ENCODE measurements at regions of chr18 and their contacts with region 1.

Region 1: DNA sequence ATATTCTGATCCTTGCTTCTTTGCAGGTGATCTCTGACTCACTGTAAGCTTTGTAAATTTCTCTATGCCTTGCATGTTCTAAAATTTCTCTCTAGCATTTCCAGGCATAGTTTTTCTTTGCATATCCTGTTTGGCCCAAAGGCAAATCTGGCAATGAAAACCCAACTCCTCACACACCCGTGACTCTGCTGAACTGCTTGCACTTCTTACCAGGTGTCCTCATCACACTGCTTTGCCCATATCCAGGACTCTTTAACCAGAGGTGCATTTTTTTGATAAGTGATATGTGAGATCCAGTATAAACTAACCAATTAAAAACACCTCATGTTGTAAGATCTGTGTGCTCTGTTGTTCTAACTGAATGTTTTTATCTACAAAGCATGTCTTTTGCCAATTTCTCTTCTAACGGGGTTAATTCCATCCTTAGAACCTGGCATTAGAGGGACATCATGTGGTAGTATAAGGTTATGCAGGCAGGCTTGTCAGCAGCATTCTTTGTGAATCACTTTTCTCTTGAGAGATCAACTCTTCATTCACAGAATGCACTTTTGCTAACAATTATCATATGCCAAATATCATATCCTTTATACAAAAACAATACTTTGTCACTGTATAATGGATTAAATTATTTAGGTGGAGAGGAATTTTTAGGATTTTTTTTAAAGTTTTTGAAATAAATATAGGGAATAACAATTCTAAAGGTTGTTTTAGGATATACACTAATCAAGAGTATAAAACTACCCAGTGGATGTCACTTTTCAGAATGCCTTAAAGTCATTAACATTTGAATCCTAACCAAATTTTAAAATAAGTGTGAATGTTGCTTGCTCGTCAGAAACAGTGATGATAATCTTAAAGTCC is 20.8 kb upstream of the TMX3 start:
- DNase-seq: peak in 5 of 9 donors; percentile 28 to 46 (median 36)
- ATAC-seq: peak; percentile 78
- H3K4me3 ChIP-seq: no peak overlapping the region
- H3K4me3 Mint-ChIP-seq: no peak overlapping the region
- H3K27ac ChIP-seq: no peak overlapping the region
- H3K27ac Mint-ChIP-seq: no peak overlapping the region
- H3K4me1 ChIP-seq: no peaks in the 10 kb centered on the region
- H3K4me1 Mint-ChIP-seq: peaks cover 0 to 5% (median 0%) of the 10 kb centered on the region in 7 donors
- H3K27me3 ChIP-seq: no peaks in the 10 kb centered on the region
- H3K27me3 Mint-ChIP-seq: no peaks in the 10 kb centered on the region

Region 2: GRCh38 chr18:68721681-68722583 is 13.8 kb before region 1 on chr18:
- CTCF ChIA-PET with region 1: no interaction called
- POLR2A ChIA-PET with region 1: interaction called, 3 read pairs
- intact Hi-C with region 1: loop called in 1 of 2 experiments (anchors 2 kb)
- DNase-seq: peak in 7 of 9 donors; percentile 16 to 42 (median 37)
- ATAC-seq: peak; percentile 79
- H3K4me3 ChIP-seq: peak overlapping the region; percentile 53
- H3K4me3 Mint-ChIP-seq: peak overlapping the region; percentile 65 to 94 (median 88)
- H3K27ac ChIP-seq: peak overlapping the region; percentile 59
- H3K27ac Mint-ChIP-seq: peak overlapping the region; percentile 87 to 95 (median 93)
- H3K4me1 ChIP-seq: peaks cover 0 to 12% of the 10 kb centered on the region in 2 donors
- H3K4me1 Mint-ChIP-seq: peaks cover 11 to 42% (median 33%) of the 10 kb centered on the region in 7 donors
- H3K27me3 ChIP-seq: no peaks in the 10 kb centered on the region
- H3K27me3 Mint-ChIP-seq: no peaks in the 10 kb centered on the region

Region 3: GRCh38 chr18:69326074-69326473 is 590.4 kb after region 1 on chr18:
- CTCF ChIA-PET with region 1: no interaction called
- POLR2A ChIA-PET with region 1: no interaction called
- intact Hi-C with region 1: no loop called
- DNase-seq: no peak
- ATAC-seq: no peak
- H3K4me3 ChIP-seq: no peak overlapping the region
- H3K4me3 Mint-ChIP-seq: no peak overlapping the region
- H3K27ac ChIP-seq: no peak overlapping the region
- H3K27ac Mint-ChIP-seq: no peak overlapping the region
- H3K4me1 ChIP-seq: no peaks in the 10 kb centered on the region
- H3K4me1 Mint-ChIP-seq: no peaks in the 10 kb centered on the region
- H3K27me3 ChIP-seq: no peaks in the 10 kb centered on the region
- H3K27me3 Mint-ChIP-seq: peaks cover 0 to 11% (median 3%) of the 10 kb centered on the region in 5 donors

Measured in naive thymus-derived CD4-positive, alpha-beta T cell (primary cell).